ENCODE measurements at regions of chr1 and their contacts with region 1.

Region 1: GRCh38 chr1:78607334-78607927 is 12.8 kb upstream of the IFI44L start:
- DNase-seq: no peak
- ATAC-seq: peak; percentile 48 to 72 (median 68)
- H3K4me3 ChIP-seq: no peak overlapping the region
- H3K27ac ChIP-seq: no peak overlapping the region
- H3K4me1 ChIP-seq: no peaks in the 10 kb centered on the region
- H3K27me3 ChIP-seq: no peaks in the 10 kb centered on the region
- CTCF ChIP-seq: peak; percentile 33 to 63 (median 56)

Region 2: DNA sequence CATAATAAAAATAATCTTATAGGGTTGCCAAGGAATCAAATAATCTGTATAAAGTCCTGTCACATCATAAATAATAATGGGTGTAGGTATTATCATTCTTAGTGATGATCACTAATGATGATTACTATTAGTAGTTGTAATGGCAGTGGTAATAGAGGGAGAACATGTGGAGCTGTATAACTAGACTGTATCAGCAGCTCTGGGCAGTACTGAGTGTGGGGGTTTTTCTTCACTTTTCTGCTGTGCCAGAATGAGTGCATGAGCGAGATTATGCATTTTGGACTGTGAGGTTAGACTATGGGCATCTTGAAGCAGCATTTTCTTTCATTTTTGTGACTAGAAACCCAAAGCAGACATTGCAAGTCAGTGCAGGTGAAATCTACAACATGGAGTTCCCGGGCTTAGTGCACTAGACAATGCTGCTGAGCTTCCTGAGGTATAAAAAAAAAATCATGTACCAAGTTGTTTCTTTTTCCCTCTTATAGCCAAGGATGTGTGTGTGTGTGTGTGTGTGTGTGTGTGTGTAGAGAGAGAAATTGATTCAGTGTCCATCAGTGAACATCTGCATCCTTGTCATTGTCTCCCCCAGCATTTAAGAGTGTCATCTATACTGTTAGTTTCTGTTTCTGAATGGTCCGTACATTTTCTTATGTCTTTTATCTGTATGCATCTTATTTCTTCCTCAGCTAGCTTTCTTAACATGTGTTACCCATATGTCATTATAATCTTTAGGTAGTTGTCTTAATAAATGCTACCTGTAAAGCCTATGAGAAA is 475.1 kb before region 1 on chr1:
- intact Hi-C with region 1: loop called in 1 of 3 experiments (anchors 5 kb)
- DNase-seq: no peak
- ATAC-seq: no peak
- H3K4me3 ChIP-seq: no peak overlapping the region
- H3K27ac ChIP-seq: no peak overlapping the region
- H3K4me1 ChIP-seq: no peaks in the 10 kb centered on the region
- H3K27me3 ChIP-seq: no peaks in the 10 kb centered on the region
- CTCF ChIP-seq: no peak